ENCODE measurements at regions of chr10 and their contacts with region 1.

Region 1: DNA sequence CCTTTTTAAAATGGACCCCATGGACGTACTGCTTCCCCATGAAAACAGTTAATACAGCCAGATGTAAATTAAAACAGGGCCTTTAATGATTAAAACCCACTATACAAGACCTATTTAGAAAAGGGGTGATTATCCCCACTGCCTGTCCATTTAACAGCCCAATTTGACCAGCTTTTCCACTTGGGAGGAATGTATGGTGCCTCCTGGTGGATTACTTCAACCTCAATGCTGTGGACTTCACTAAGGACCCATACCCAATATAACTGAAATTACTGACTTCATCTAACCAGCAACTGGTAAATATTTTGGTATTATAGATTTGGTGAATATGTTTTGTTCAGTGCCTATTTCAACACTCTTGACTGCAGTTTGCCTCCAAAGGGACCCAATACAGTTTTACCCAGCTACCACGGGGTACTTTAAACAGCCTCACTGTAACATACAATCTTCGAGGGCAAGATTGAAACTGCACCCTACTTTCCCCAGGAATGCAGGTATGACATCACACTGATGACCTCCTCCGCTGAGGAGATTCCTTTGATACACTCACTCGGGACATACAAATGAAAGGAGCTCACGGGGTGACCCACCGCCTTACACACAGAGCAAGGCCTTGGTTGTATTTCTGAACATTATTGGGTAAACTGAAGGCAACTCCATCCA is 192.8 kb downstream of the DNAJC1 start:
- DNase-seq: no peak
- ATAC-seq: no peak

Region 2: GRCh38 chr10:21584834-21585530 is 225.7 kb before region 1 on chr10:
- intact Hi-C with region 1: no loop called
- DNase-seq: no peak
- ATAC-seq: no peak

Region 3: DNA sequence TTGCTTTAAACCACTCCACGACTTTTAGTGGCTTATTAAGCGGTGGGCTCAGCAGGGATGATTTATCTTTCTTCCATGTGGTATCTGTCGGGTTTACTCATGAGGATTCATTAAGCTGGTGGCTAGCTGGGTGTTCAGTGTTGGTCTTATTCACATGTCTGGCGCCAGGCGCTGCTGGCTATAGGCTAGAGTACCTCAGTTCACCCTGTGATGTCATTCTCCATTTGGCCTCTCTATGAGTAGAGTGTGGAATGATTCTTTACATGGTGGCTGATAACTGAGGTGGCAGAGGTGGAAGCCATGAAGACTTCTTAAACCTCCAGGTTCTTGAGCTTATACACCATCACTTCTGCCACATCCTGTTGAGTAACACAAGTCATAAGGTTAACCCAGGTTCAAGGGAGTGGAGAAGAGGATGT is 161.2 kb before region 1 on chr10:
- intact Hi-C with region 1: no loop called
- DNase-seq: no peak
- ATAC-seq: no peak

Region 4: GRCh38 chr10:21823617-21824016 is 12.9 kb after region 1 on chr10:
- intact Hi-C with region 1: loop called (anchors 1 kb)
- DNase-seq: no peak
- ATAC-seq: no peak